Common myeloid progenitor, CD34-positive (primary cell): ENCODE measurements at regions of chr6 and their contacts with region 1.

Region 1: GRCh38 chr6:3977875-3978711 is 100.8 kb downstream of the FAM217A start:
- DNase-seq: peak; percentile 92 to 97 (median 96)
- H3K4me3 ChIP-seq: peak overlapping the region in 1 of 7 experiments; percentile 10
- H3K27ac ChIP-seq: no peak overlapping the region
- H3K4me1 ChIP-seq: peaks cover 2 to 7% (median 3%) of the 10 kb centered on the region in 4 experiments
- H3K27me3 ChIP-seq: no peaks in the 10 kb centered on the region

Region 2: GRCh38 chr6:3742426-3743344 is 235.4 kb before region 1 on chr6:
- CTCF ChIA-PET with region 1: interaction called, 90 read pairs
- POLR2A ChIA-PET with region 1: no interaction called
- DNase-seq: peak; percentile 83 to 90 (median 89)
- H3K4me3 ChIP-seq: peak overlapping the region in 5 of 7 experiments; percentile 1 to 68 (median 46)
- H3K27ac ChIP-seq: no peak overlapping the region
- H3K4me1 ChIP-seq: peaks cover 0 to 34% (median 31%) of the 10 kb centered on the region in 4 experiments
- H3K27me3 ChIP-seq: no peaks in the 10 kb centered on the region

Region 3: GRCh38 chr6:3755637-3756545 is 222.2 kb before region 1 on chr6:
- CTCF ChIA-PET with region 1: interaction called, 26 read pairs
- POLR2A ChIA-PET with region 1: no interaction called
- DNase-seq: no peak
- H3K4me3 ChIP-seq: no peak overlapping the region
- H3K27ac ChIP-seq: no peak overlapping the region
- H3K4me1 ChIP-seq: peaks cover 0 to 18% (median 10%) of the 10 kb centered on the region in 4 experiments
- H3K27me3 ChIP-seq: peaks cover 0 to 4% (median 0%) of the 10 kb centered on the region in 5 experiments

Region 4: GRCh38 chr6:3887150-3887700 is 90.9 kb before region 1 on chr6:
- CTCF ChIA-PET with region 1: interaction called, 15 read pairs
- POLR2A ChIA-PET with region 1: no interaction called
- DNase-seq: peak; percentile 18 to 45 (median 39)
- H3K4me3 ChIP-seq: no peak overlapping the region
- H3K27ac ChIP-seq: no peak overlapping the region
- H3K4me1 ChIP-seq: no peaks in the 10 kb centered on the region
- H3K27me3 ChIP-seq: no peaks in the 10 kb centered on the region

Region 5: GRCh38 chr6:3939964-3940363 is 38.1 kb before region 1 on chr6:
- CTCF ChIA-PET with region 1: interaction called, 20 read pairs
- POLR2A ChIA-PET with region 1: no interaction called
- DNase-seq: peak; percentile 73 to 90 (median 84)
- H3K4me3 ChIP-seq: peak overlapping the region in 2 of 7 experiments; percentile 0 to 14
- H3K27ac ChIP-seq: no peak overlapping the region
- H3K4me1 ChIP-seq: peaks cover 0 to 29% (median 4%) of the 10 kb centered on the region in 4 experiments
- H3K27me3 ChIP-seq: no peaks in the 10 kb centered on the region

Region 6: GRCh38 chr6:3962957-3963303 is 15.2 kb before region 1 on chr6:
- CTCF ChIA-PET with region 1: interaction called, 23 read pairs
- POLR2A ChIA-PET with region 1: no interaction called
- DNase-seq: no peak
- H3K4me3 ChIP-seq: no peak overlapping the region
- H3K27ac ChIP-seq: no peak overlapping the region
- H3K4me1 ChIP-seq: no peaks in the 10 kb centered on the region
- H3K27me3 ChIP-seq: no peaks in the 10 kb centered on the region

Region 7: GRCh38 chr6:3997177-3997770 is 19.2 kb after region 1 on chr6:
- CTCF ChIA-PET with region 1: interaction called, 25 read pairs
- POLR2A ChIA-PET with region 1: no interaction called
- DNase-seq: no peak
- H3K4me3 ChIP-seq: no peak overlapping the region
- H3K27ac ChIP-seq: no peak overlapping the region
- H3K4me1 ChIP-seq: peaks cover 0 to 2% (median 0%) of the 10 kb centered on the region in 4 experiments
- H3K27me3 ChIP-seq: no peaks in the 10 kb centered on the region